Sigmoid colon (tissue), 7 donors: ENCODE measurements at regions of chr18 and their contacts with region 1.

Region 1: GRCh38 chr18:54679318-54680149 is 88.5 kb downstream of the DYNAP start:
- DNase-seq: no peak
- H3K4me3 ChIP-seq: no peak overlapping the region
- H3K27ac ChIP-seq: no peak overlapping the region
- H3K4me1 ChIP-seq: no peaks in the 10 kb centered on the region
- H3K27me3 ChIP-seq: no peaks in the 10 kb centered on the region
- CTCF ChIP-seq: peak in 1 of 4 experiments; percentile 16
- EP300 ChIP-seq: no peak
- POLR2A ChIP-seq: no peak

Region 2: GRCh38 chr18:54734059-54734458 is 54.5 kb after region 1 on chr18:
- intact Hi-C with region 1: no loop called
- DNase-seq: no peak
- H3K4me3 ChIP-seq: no peak overlapping the region
- H3K27ac ChIP-seq: no peak overlapping the region
- H3K4me1 ChIP-seq: no peaks in the 10 kb centered on the region
- H3K27me3 ChIP-seq: no peaks in the 10 kb centered on the region
- CTCF ChIP-seq: no peak
- EP300 ChIP-seq: no peak
- POLR2A ChIP-seq: no peak

Region 3: DNA sequence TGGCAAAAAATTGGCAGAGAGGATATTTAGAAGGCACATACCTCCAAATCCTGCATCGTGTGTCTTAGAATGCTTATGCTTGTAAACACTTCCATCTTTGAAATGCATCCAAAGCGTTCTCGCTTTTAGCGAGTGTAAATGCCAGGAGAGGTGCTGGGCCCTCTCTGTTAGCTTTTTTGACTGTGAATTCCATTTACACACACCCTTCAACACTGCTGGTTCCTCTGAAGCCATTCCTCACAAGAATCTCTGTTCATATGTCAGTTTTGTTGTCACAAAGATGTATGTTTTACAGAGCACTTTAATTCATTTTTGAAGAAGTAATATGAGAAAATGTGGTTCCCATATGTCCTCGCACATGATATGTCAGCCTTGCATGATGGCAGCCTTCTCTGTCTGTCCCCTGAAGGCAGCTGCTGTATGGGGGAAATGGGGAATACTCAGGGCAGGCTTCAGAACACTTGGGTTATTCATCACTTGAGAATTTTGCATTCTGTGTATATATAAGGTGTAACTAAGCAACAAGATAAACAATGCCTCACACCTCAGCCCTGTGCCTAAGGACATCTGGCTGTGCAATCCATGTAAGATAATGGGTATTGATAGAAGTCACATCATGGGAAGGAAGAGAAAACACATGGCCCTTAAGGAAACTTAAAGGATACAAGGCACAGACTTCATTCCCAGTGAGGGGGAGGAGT is 201.0 kb after region 1 on chr18:
- intact Hi-C with region 1: loop called (anchors 5 kb)
- DNase-seq: no peak
- H3K4me3 ChIP-seq: no peak overlapping the region
- H3K27ac ChIP-seq: no peak overlapping the region
- H3K4me1 ChIP-seq: no peaks in the 10 kb centered on the region
- H3K27me3 ChIP-seq: no peaks in the 10 kb centered on the region
- CTCF ChIP-seq: no peak
- EP300 ChIP-seq: no peak
- POLR2A ChIP-seq: no peak

Region 4: DNA sequence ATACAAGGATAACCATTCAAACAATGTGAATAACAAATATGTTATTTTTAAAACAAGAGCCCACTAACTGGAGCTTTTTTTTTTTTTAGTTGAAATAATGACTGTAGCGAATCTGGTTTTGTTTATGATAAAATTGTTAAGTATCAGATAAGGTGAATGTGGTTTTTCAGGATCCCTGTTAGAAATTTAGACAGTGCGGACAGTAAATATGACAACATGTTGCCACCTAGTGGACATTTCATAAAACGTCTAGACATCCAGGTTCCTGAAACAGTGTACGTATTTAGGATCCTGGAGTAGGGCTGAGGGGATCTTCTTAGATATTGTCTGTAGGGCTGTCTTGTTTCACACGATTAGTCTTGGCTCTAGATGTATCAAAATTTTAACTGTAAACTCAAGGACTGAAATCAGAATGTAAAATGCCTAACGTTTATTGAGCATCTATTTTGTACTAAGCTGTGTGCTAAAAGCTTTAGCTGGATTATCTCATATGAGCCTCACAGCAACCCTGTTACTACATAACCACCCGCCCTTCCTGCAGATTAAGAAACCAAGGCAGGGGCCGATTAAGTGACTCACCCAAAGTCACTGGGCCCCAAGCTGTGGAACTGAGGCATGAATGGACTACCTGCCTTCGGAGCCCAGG is 303.6 kb after region 1 on chr18:
- intact Hi-C with region 1: loop called (anchors 2 kb)
- DNase-seq: no peak
- H3K4me3 ChIP-seq: no peak overlapping the region
- H3K27ac ChIP-seq: no peak overlapping the region
- H3K4me1 ChIP-seq: no peaks in the 10 kb centered on the region
- H3K27me3 ChIP-seq: no peaks in the 10 kb centered on the region
- CTCF ChIP-seq: peak in 3 of 4 experiments; percentile 41 to 64 (median 62)
- EP300 ChIP-seq: no peak
- POLR2A ChIP-seq: no peak

Region 5: GRCh38 chr18:56575819-56576663 is 1896.5 kb after region 1 on chr18:
- intact Hi-C with region 1: loop called (anchors 10 kb)
- DNase-seq: no peak
- H3K4me3 ChIP-seq: no peak overlapping the region
- H3K27ac ChIP-seq: no peak overlapping the region
- H3K4me1 ChIP-seq: peaks cover 0 to 16% (median 9%) of the 10 kb centered on the region in 4 donors
- H3K27me3 ChIP-seq: no peaks in the 10 kb centered on the region
- CTCF ChIP-seq: peak; percentile 28 to 66 (median 62)
- EP300 ChIP-seq: no peak
- POLR2A ChIP-seq: no peak